ENCODE measurements at regions of chr2 and their contacts with region 1.

Region 1: DNA sequence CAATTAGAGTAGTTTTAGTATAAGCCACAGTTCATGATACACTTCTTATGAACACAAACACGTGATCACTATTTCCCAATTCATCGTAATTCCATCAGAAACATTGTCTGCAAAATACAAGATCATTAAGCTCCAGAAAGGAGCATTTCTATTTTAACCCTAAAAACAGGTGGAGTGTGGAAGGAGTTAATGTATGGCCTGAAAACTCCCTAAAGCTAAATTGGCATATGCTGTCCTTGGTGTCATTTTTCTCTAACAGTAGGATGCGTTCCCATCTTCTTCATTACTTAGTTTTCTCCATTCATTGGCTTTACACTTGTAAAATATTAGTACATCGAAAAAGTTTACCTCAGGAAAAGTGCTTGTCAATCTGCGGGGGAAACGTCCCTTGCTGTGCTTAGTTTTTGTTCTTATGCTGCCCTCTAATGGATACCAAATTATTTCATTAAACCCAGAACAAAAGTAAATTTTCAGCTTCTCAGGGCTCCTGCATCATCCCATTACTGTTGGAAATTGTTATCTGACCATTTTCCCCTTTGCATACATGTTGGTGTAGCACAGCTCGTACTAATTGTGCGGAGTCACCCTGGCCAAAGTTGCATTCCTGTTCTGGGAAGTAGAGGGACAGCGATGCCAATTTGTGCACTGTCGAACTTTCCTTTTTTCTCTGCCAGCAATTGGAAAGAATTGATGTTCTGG is 153.4 kb downstream of the GPD2 start:
- DNase-seq: peak; percentile 34
- H3K4me3 Mint-ChIP-seq: no peak overlapping the region
- H3K27ac Mint-ChIP-seq: no peak overlapping the region
- H3K4me1 Mint-ChIP-seq: no peaks in the 10 kb centered on the region
- H3K27me3 Mint-ChIP-seq: no peaks in the 10 kb centered on the region

Region 2: GRCh38 chr2:155377266-155377680 is 1212.3 kb before region 1 on chr2:
- CTCF ChIA-PET with region 1: interaction called, 5 read pairs
- intact Hi-C with region 1: loop called (anchors 1 kb)
- DNase-seq: no peak
- H3K4me3 Mint-ChIP-seq: no peak overlapping the region
- H3K27ac Mint-ChIP-seq: no peak overlapping the region
- H3K4me1 Mint-ChIP-seq: peaks cover 2% of the 10 kb centered on the region
- H3K27me3 Mint-ChIP-seq: peaks cover 2% of the 10 kb centered on the region

Region 3: DNA sequence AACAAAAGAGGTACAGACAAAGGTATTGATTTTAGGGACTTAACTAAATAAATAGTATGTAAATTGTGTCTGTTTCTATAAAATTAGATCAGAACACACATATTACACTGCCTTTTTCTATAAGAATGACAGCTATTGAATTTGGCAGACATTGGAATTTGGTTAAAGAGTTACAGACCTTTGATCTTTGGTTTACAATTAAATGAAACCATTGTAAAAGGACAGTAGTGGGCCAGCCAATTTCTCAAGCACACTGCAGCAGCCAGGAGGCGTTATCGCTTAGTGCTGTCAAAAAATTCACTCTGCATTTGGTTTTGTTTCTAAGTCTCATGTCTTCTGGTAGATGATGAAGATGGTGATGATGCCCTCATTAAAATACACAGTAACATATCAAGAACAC is 432.9 kb before region 1 on chr2:
- CTCF ChIA-PET with region 1: no interaction called
- intact Hi-C with region 1: loop called (anchors 2 kb)
- DNase-seq: no peak
- H3K4me3 Mint-ChIP-seq: no peak overlapping the region
- H3K27ac Mint-ChIP-seq: no peak overlapping the region
- H3K4me1 Mint-ChIP-seq: no peaks in the 10 kb centered on the region
- H3K27me3 Mint-ChIP-seq: no peaks in the 10 kb centered on the region

Region 4: GRCh38 chr2:156400706-156401678 is 188.5 kb before region 1 on chr2:
- CTCF ChIA-PET with region 1: interaction called, 7 read pairs
- intact Hi-C with region 1: loop called (anchors 2 kb)
- DNase-seq: peak; percentile 85
- H3K4me3 Mint-ChIP-seq: peak overlapping the region; percentile 89
- H3K27ac Mint-ChIP-seq: peak overlapping the region; percentile 99
- H3K4me1 Mint-ChIP-seq: peaks cover 34% of the 10 kb centered on the region
- H3K27me3 Mint-ChIP-seq: peaks cover 5% of the 10 kb centered on the region

Region 5: GRCh38 chr2:156445296-156446217 is 144.0 kb before region 1 on chr2:
- CTCF ChIA-PET with region 1: no interaction called
- intact Hi-C with region 1: no loop called
- DNase-seq: no peak
- H3K4me3 Mint-ChIP-seq: no peak overlapping the region
- H3K27ac Mint-ChIP-seq: no peak overlapping the region
- H3K4me1 Mint-ChIP-seq: peaks cover 15% of the 10 kb centered on the region
- H3K27me3 Mint-ChIP-seq: no peaks in the 10 kb centered on the region

Region 6: DNA sequence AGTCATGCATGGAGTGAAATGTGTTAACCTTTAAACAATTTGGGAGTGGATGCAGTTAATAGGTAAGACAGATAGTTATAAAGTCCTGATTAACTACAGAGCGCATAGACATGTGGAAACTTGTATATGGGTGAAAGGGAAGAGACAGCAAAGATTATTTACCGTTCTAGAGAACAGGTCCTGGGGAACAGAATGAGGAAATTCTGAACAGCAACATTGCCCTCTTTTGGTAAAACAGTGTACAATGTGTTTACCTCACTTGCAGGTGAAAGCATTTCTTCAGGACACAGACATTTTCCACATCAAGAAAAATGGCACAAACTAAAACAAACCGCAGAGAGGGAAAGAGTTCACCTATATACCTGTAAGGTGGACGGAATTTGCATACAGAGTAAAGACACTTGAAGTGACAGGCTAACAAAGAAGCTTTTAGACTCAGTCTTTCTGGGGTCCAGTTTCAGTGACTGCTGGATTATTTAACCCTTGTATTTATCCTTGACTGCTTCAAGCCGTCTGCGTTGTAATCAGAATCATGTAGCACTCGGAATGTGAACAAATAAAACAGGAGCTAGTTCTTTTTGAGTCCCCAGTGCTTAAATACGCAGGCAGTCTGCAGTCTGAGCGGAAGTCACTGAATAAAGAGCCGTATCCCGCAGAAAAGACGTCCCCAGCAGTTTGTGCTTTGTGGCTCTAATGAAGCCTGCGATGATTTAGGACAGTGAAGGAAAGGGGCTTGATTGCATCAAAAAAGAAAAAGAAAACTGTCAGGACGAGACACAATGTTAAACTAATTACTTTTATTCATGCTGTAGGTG is 303.1 kb after region 1 on chr2:
- CTCF ChIA-PET with region 1: no interaction called
- intact Hi-C with region 1: loop called (anchors 10 kb)
- DNase-seq: no peak
- H3K4me3 Mint-ChIP-seq: no peak overlapping the region
- H3K27ac Mint-ChIP-seq: no peak overlapping the region
- H3K4me1 Mint-ChIP-seq: peaks cover 5% of the 10 kb centered on the region
- H3K27me3 Mint-ChIP-seq: peaks cover 15% of the 10 kb centered on the region

Measured in activated naive CD4-positive, alpha-beta T cell treated with anti-CD3 and anti-CD28 coated beads for 36 hours (primary cell).